Cardiac septum (tissue), 1 donor: ENCODE measurements at regions of chr10 and their contacts with region 1.

Region 1: DNA sequence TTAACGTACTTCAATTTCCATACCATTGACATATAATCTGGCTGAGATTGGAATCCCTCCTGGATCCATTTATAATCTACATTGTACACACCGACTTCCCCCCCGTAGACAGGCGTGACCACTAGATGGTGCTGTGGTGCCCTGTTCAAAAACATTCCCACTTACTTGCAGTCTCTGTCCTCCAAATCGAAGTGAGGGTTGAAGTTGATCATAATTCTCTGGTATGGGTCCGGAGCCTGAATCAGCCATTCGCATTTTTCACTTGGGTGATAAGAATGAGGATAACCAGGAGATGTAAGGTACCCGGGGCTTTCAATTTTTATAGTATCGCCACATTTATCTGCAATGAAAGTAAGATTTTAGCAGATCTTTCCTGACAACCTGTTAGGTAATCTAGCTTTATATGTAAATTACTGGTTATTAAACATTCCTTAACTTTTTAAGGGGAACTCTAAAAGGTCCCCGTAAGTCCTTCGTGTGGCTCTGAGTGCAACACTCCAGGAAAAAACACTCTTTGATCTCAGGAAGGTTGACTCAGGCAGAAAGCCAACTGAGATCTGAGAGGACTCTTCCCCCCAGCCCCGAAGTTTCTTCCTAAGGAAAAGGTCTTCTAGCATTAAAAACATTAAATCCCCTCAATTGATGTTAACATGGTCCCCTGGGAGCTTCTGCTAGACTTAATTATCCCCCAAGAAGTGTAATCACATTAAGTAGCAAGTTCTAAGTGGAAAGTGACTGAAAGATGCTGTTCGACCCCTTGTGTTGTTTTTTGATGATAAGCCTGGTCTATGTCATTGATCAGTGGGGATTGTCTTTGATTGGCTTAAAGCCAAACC is 3.7 kb downstream of the NRP1 start:
- DNase-seq: peak; percentile 91

Region 2: GRCh38 chr10:33193057-33193700 is 137.6 kb before region 1 on chr10:
- intact Hi-C with region 1: loop called (anchors 2 kb)
- DNase-seq: peak; percentile 87

Region 3: GRCh38 chr10:33273295-33274002 is 57.3 kb before region 1 on chr10:
- intact Hi-C with region 1: loop called (anchors 5 kb)
- DNase-seq: peak; percentile 91

Region 4: GRCh38 chr10:33460505-33461294 is 129.9 kb after region 1 on chr10:
- intact Hi-C with region 1: no loop called
- DNase-seq: no peak

Region 5: DNA sequence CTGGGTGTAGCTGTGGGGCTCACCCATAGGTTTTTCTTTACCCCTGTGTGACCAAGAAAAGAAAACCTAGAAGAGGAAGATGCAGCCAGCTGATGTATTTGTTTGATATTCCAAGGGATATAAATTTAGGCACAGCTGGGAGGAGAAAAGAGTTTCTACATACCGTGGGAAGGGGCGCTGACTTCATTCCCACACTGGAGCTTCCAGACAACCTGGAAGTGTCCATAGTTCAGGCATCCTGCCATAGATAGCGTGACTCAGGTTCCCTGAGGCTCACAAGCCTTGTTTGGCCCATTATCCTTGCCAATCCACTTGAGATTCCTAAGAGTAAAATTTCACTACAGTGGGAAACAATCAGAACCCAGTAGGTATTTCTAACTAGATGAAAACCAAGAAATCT is 375.4 kb after region 1 on chr10:
- intact Hi-C with region 1: loop called (anchors 5 kb)
- DNase-seq: no peak

Region 6: GRCh38 chr10:34522546-34522945 is 1191.8 kb after region 1 on chr10:
- intact Hi-C with region 1: loop called (anchors 10 kb)
- DNase-seq: no peak